CD4-positive, alpha-beta T cell (primary cell): ENCODE measurements at regions of chr12 and their contacts with region 1.

Region 1: DNA sequence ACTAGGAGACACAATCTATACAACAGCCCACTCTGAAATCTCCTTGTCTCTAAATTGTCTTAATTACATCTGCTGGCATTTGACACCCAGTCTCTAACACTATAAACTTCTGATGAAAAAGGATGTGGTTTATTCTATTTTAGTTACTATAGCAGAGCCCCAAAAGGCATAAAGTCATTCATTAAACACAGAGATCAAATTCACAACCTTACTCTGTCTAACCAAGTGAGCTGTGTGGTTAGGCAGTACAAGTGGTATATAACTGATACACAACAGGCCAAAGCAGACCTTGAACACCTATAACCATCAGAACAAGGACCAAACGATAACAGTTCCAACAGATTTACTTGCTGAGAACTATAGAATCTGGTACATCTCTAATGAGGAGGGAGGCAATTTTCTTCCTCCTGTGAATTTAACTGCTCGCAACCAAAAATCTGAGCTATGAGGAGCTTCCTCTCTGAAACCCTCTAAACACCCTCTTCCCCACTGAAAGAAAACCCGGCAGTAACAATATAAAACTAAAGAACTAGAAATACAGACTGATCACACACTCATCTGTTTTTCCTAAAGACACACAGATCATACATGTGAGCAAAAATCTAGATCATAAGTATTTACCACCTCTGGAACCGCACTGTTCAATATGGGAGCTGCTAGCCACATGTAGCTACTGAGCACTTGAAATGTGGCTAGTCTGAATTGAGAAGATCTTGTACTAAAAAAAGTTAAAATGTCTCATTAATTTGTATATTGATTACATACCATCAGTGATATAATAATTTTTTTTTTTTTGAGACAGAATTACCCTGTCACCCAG is 17.7 kb downstream of the SPPL3 start:
- DNase-seq: peak in 1 of 14 experiments; percentile 45
- ATAC-seq: peak; percentile 77
- H3K4me3 ChIP-seq: no peak overlapping the region
- H3K4me3 Mint-ChIP-seq: peak overlapping the region; percentile 9
- H3K27ac ChIP-seq: no peak overlapping the region
- H3K27ac Mint-ChIP-seq: peak overlapping the region; percentile 47
- H3K4me1 ChIP-seq: peaks cover 30% of the 10 kb centered on the region
- H3K4me1 Mint-ChIP-seq: peaks cover 74% of the 10 kb centered on the region
- H3K27me3 ChIP-seq: no peaks in the 10 kb centered on the region
- H3K27me3 Mint-ChIP-seq: no peaks in the 10 kb centered on the region
- CTCF ChIP-seq: no peak

Region 2: DNA sequence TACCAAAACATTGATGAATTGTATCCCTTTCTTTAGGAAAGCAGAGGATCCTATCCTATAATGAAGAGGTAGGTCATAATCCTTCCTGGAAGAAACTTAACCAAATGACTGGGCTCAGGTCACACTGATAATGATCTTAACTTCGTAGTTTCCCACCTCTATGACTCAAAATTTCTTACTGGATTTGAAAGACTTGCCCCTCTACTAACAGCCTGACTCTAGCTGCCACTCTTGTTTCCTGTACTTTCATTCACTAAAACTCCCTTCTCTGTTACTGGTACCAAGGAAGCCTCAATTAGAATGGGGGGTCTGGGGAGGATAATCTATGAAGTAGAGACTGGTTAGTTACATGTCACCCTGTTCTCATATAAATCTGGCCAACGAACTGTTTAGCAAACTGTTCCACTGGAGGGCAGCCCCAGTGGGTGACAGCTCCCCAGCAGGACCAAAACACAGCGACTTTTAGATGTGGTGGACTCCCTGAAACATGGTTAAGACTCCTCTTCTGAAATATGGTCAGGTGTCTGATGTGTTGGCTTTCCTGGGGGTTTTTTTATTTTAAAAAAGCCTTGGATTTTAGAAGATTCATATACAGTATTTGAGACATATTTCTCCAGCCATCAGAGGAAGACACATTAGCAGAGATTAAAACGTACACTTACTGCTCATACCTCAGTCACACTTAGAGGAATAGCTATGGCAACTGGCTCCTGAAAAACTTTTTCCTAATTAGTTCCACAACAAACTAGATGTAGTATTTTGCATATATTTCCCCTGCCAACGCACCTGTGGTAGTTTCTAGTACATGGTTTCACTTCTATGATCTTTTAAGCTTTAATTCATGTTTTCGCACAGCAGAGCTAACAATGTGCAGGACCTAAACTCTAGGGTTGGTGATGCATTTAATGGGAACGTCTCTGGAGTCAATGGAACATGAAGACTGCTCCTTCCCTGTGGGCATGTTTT is 88.4 kb before region 1 on chr12:
- CTCF ChIA-PET with region 1: no interaction called
- POLR2A ChIA-PET with region 1: no interaction called
- intact Hi-C with region 1: loop called in 1 of 2 experiments (anchors 10 kb)
- DNase-seq: no peak
- ATAC-seq: no peak
- H3K4me3 ChIP-seq: no peak overlapping the region
- H3K4me3 Mint-ChIP-seq: no peak overlapping the region
- H3K27ac ChIP-seq: no peak overlapping the region
- H3K27ac Mint-ChIP-seq: no peak overlapping the region
- H3K4me1 ChIP-seq: no peaks in the 10 kb centered on the region
- H3K4me1 Mint-ChIP-seq: peaks cover 36% of the 10 kb centered on the region
- H3K27me3 ChIP-seq: no peaks in the 10 kb centered on the region
- H3K27me3 Mint-ChIP-seq: no peaks in the 10 kb centered on the region
- CTCF ChIP-seq: no peak

Region 3: DNA sequence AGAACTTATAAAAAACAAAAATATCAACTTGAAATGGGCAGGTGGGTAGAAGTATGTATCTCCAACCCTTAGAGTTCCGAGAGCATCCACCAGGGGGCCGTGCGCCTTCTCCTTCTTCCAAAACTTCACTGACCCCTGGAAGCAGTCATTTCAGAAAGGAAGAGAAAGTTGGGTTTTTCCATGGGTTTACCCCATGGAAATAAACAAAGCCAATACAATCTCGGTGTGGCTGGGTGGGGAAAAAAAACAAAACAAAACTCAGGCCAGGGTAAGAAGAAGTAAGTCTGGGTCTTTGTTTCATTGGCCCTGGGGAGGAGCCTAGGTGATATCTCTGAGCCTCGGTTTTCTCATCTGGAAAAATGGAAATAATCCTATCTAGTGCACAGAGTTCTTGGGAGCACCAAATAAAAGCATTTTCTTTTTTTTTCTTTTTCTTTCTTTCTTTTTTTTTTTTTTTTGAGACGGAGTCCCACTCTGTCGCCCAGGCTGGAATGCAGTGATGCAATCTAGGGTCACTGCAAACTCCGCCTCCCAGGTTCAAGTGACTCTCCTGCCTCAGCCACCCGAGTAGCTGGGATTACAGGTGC is 58.3 kb after region 1 on chr12:
- CTCF ChIA-PET with region 1: no interaction called
- POLR2A ChIA-PET with region 1: no interaction called
- intact Hi-C with region 1: no loop called
- DNase-seq: peak; percentile 32 to 80 (median 58)
- ATAC-seq: peak; percentile 71
- H3K4me3 ChIP-seq: no peak overlapping the region
- H3K4me3 Mint-ChIP-seq: no peak overlapping the region
- H3K27ac ChIP-seq: no peak overlapping the region
- H3K27ac Mint-ChIP-seq: no peak overlapping the region
- H3K4me1 ChIP-seq: no peaks in the 10 kb centered on the region
- H3K4me1 Mint-ChIP-seq: peaks cover 5% of the 10 kb centered on the region
- H3K27me3 ChIP-seq: no peaks in the 10 kb centered on the region
- H3K27me3 Mint-ChIP-seq: peaks cover under 1% of the 10 kb centered on the region
- CTCF ChIP-seq: peak; percentile 68